ENCODE measurements at regions of chr1 and their contacts with region 1.

Region 1: GRCh38 chr1:154272217-154272998 is at the start of gene HAX1:
- DNase-seq: peak; percentile 64 to 91
- H3K4me3 ChIP-seq: peak within 1 kb of the TSS; percentile 89 to 98 (median 94)
- H3K27ac ChIP-seq: peak within 1 kb of the TSS; percentile 81; the same call in 1 of the 2 replicates
- H3K4me1 ChIP-seq: peaks cover 0 to 5% (median 0%) of the 10 kb centered on the region in 4 experiments; a peak in 2 of 7 replicates
- H3K27me3 ChIP-seq: no peaks in the 10 kb centered on the region
- CTCF ChIP-seq: peak; percentile 73 to 85 (median 78)
- EP300 ChIP-seq: no peak
- POLR2A ChIP-seq: peak in 1 of 2 experiments; percentile 53; a peak in 2 of 3 replicates
- RAD21 ChIP-seq: peak; percentile 80 to 84
- total RNA-seq, gene HAX1: 73.7 and 82.2 TPM in 2 replicates

Region 2: DNA sequence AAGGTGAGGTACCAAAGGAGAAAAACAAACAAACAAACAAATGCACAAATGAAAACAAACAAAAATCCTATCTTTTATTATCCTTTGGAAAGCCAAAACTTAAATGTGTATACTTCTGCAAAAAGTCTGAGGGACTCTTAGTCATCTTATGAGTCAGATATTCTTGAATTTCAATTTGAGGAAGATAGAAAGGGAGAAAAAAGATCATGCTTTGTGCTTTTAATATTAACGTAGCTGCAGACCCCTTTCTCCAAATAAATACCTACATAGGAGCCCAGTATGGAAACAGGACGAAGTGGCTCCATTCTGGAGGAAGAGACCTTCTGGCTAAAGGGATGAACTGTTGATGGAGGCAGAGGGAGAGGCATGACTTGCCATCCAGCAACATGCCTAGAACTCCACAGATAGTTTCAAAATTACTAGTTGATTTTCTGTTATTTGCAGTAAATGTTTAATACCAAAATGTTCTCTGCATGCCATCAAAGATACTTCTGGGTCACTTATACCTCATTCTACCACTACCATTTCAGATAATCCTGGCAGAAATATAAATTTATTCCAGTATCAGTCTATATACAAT is 142.9 kb before region 1 on chr1:
- CTCF ChIA-PET with region 1: no interaction called
- POLR2A ChIA-PET with region 1: no interaction called
- DNase-seq: no peak
- H3K4me3 ChIP-seq: no peak overlapping the region
- H3K27ac ChIP-seq: no peak overlapping the region
- H3K4me1 ChIP-seq: no peaks in the 10 kb centered on the region
- H3K27me3 ChIP-seq: no peaks in the 10 kb centered on the region
- CTCF ChIP-seq: no peak
- EP300 ChIP-seq: no peak
- POLR2A ChIP-seq: no peak
- RAD21 ChIP-seq: no peak

Region 3: DNA sequence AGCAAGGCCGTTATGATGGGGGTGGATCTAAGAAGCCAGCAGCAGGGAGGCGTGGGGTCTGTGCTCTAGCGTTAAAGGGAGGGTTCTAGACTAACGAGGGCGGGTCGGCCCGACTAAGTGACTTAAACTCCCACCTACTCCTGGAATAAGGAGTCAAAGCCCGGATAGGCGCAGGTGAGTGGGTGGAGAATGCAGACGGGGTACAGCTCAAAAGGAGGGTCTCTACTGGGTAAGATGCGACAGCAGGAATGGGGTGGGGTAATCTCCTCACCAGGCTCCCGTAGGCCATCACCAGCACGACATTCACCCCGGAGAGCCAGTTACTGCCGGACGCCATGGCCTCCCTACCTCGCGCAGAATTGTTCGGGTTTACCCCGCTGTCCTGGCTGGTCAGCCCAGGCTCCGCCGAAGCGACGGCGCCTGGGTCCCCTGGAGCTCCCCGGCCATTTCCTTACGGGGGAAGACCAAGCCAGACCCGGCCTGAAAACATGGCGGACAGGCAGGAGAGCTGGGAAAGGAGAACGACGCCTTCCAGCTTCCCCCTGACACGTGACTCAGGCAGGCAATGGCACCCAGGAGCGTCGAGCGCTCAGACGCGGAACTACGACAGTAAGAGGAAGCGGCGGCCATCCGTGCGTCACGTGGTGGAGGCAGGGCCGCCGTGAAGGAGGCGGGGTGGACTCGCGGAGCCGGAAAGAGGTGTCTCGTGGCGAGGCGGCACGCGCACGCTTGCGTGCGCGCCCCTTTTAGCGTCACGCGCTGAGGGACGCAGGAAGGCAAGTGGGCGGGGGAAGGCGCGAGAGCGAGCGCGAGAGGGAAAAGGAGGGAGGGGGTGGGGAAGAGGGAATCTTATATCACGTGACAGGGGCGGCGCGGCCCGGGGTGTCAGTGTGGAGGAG is 52.1 kb before region 1 on chr1 and contains the start of gene UBAP2L:
- CTCF ChIA-PET with region 1: interaction called, 4 read pairs
- POLR2A ChIA-PET with region 1: interaction called, 15 read pairs
- DNase-seq: peak; percentile 96 to 99
- H3K4me3 ChIP-seq: peak within 1 kb of the TSS; percentile 83 to 96 (median 90)
- H3K27ac ChIP-seq: peak within 1 kb of the TSS; percentile 99
- H3K4me1 ChIP-seq: peaks cover 2 to 11% (median 3%) of the 10 kb centered on the region in 4 experiments; a peak in 5 of 7 replicates
- H3K27me3 ChIP-seq: no peaks in the 10 kb centered on the region
- CTCF ChIP-seq: no peak
- EP300 ChIP-seq: no peak
- POLR2A ChIP-seq: peak; percentile 90 to 97
- RAD21 ChIP-seq: no peak
- total RNA-seq, gene UBAP2L: 253 and 254 TPM in 2 replicates

Region 4: DNA sequence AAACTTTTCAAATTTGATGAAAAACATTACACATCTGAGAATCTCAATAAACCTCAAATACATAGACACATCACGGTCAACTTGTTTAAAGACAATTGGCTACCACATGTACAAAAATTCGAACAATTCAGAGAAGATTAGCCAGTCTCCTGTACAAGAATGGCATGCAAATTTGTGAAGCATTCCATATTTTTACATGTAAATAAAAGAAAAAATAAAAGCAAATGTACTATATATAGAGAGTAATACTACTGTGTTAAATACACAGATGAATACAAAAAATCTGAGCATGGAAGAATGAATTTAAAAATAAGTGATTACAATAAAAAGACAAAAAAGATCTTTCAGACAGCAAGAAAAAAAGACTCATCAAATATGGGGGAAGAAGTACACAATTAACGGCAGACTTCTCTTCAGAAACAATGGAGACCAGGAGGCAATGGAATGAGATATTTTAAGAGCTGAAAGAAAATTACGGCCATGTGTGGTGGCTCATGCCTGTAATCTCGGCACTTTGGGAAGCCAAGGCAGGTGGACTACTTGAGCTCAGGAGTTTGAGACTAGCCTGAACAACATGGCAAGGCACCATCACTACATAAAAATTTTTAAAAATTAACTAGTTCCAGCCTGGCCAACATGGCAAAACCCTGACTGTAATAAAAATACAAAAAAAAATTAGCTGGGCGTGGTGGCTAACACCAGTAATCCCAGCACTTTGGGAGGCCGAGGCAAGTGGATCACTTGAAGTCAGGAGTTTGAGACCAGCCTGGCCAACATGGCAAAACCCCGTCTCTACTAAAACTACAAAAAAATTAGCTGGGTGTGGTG is 23.2 kb after region 1 on chr1:
- CTCF ChIA-PET with region 1: interaction called, 10 read pairs
- POLR2A ChIA-PET with region 1: no interaction called
- DNase-seq: no peak
- H3K4me3 ChIP-seq: no peak overlapping the region
- H3K27ac ChIP-seq: no peak overlapping the region
- H3K4me1 ChIP-seq: no peaks in the 10 kb centered on the region
- H3K27me3 ChIP-seq: no peaks in the 10 kb centered on the region
- CTCF ChIP-seq: no peak
- EP300 ChIP-seq: no peak
- POLR2A ChIP-seq: no peak
- RAD21 ChIP-seq: no peak

Region 5: GRCh38 chr1:154335025-154335714 is 62.8 kb after region 1 on chr1:
- CTCF ChIA-PET with region 1: interaction called, 84 read pairs
- POLR2A ChIA-PET with region 1: interaction called, 4 read pairs
- DNase-seq: peak in 1 of 2 experiments; percentile 90
- H3K4me3 ChIP-seq: no peak overlapping the region
- H3K27ac ChIP-seq: no peak overlapping the region
- H3K4me1 ChIP-seq: no peaks in the 10 kb centered on the region
- H3K27me3 ChIP-seq: no peaks in the 10 kb centered on the region
- CTCF ChIP-seq: peak; percentile 68 to 90 (median 89)
- EP300 ChIP-seq: no peak
- POLR2A ChIP-seq: no peak
- RAD21 ChIP-seq: peak; percentile 74 to 78

Region 6: GRCh38 chr1:154352581-154353459 is 80.4 kb after region 1 on chr1:
- CTCF ChIA-PET with region 1: interaction called, 10 read pairs
- POLR2A ChIA-PET with region 1: interaction called, 4 read pairs
- DNase-seq: peak in 1 of 2 experiments; percentile 76
- H3K4me3 ChIP-seq: peak overlapping the region; percentile 34 to 77 (median 62)
- H3K27ac ChIP-seq: no peak overlapping the region
- H3K4me1 ChIP-seq: peaks cover 0 to 13% (median 5%) of the 10 kb centered on the region in 4 experiments; a peak in 4 of 7 replicates
- H3K27me3 ChIP-seq: peaks cover 0 to 7% (median 4%) of the 10 kb centered on the region in 4 experiments; a peak in 4 of 7 replicates
- CTCF ChIP-seq: peak in 1 of 3 experiments; percentile 0; a peak in 1 of 4 replicates
- EP300 ChIP-seq: no peak
- POLR2A ChIP-seq: peak in 1 of 2 experiments; percentile 44; a peak in 1 of 3 replicates
- RAD21 ChIP-seq: no peak

Measured in H1 (cell line).